HCT116 (cell line): ENCODE measurements at regions of chr14 and their contacts with region 1.

Region 1: DNA sequence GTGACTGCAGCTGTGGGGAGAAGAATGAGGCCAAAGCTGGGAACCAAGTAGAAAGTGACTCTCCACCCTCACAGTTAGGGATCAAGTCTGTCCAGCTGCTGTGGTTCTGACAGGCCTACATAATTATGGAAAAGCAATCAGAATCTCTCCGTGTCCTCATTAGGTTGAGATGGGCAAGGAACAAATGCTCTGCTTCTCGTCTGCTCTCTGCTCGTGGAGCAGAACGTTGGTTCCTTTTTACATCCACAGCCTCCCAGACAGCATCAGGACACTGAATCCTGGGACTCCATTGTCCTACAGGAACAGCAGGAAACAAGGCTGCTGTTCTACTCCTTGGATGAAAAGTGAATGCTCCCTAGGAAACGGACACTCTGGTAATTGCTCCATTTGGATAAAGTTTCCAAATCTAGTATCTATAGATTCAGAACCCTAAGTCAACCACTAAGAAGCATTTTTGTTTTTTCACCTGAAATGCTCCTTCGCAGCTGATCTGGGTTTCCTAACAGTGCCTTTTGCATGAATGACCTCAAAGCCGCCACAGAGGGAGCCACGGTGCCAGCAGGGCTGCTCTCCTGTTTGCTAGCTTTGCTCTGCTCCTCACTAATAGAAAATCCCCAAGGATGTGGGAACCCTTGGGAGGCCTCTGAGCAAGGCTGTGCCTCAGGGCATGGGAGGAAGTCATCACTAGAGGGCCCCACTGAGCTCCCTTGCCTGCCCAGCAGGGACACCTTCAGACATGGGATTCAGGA is 102.0 kb downstream of the EGLN3 start:
- DNase-seq: peak; percentile 82
- ATAC-seq: peak; percentile 99
- H3K4me3 ChIP-seq: no peak overlapping the region
- H3K27ac ChIP-seq: no peak overlapping the region
- H3K4me1 ChIP-seq: peaks cover 0 to 4% of the 10 kb centered on the region in 2 experiments; a peak in 2 of 4 replicates
- H3K27me3 ChIP-seq: no peaks in the 10 kb centered on the region
- CTCF ChIP-seq: peak; percentile 91 to 96 (median 95)
- POLR2A ChIP-seq: no peak
- RAD21 ChIP-seq: peak; percentile 82

Region 2: DNA sequence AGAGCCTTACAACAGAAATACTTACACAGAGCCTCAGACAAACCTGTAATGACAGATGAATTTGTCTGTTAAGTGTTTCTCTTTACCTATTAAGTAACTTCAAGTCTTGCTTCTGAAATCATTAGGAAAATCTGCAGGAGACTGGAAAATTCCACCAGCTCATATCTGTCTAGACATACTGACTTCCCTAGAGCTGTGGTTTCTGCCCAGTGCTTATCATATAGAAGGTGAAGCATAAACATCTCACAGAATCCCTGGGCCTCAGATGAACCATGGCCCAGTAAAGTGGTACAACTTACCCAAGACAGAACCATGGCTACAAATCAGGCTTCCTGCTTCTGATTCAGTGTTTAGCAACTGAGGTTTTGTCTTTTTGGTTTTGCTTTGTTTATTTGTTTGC is 10.4 kb after region 1 on chr14:
- CTCF ChIA-PET with region 1: interaction called, 12 read pairs
- POLR2A ChIA-PET with region 1: no interaction called
- RAD21 ChIA-PET with region 1: no interaction called
- intact Hi-C with region 1: no loop called
- DNase-seq: no peak
- ATAC-seq: no peak
- H3K4me3 ChIP-seq: no peak overlapping the region
- H3K27ac ChIP-seq: no peak overlapping the region
- H3K4me1 ChIP-seq: no peaks in the 10 kb centered on the region
- H3K27me3 ChIP-seq: no peaks in the 10 kb centered on the region
- CTCF ChIP-seq: no peak
- POLR2A ChIP-seq: no peak
- RAD21 ChIP-seq: no peak

Region 3: GRCh38 chr14:34059855-34060638 is 211.2 kb after region 1 on chr14:
- CTCF ChIA-PET with region 1: interaction called, 10 read pairs
- POLR2A ChIA-PET with region 1: no interaction called
- RAD21 ChIA-PET with region 1: no interaction called
- intact Hi-C with region 1: no loop called
- DNase-seq: no peak
- ATAC-seq: peak; percentile 94
- H3K4me3 ChIP-seq: peak overlapping the region; percentile 42 to 63
- H3K27ac ChIP-seq: peak overlapping the region; percentile 82
- H3K4me1 ChIP-seq: peaks cover 8 to 36% of the 10 kb centered on the region in 2 experiments; a peak in 3 of 4 replicates
- H3K27me3 ChIP-seq: no peaks in the 10 kb centered on the region
- CTCF ChIP-seq: 0 out of 6 replicates have a peak, but pooled peaks of 1 of the 3 experiments have one; percentile 10
- POLR2A ChIP-seq: peak; percentile 63
- RAD21 ChIP-seq: peak; percentile 36

Region 4: GRCh38 chr14:34081576-34082136 is 232.8 kb after region 1 on chr14:
- CTCF ChIA-PET with region 1: interaction called, 14 read pairs
- POLR2A ChIA-PET with region 1: no interaction called
- RAD21 ChIA-PET with region 1: interaction called, 3 read pairs
- intact Hi-C with region 1: no loop called
- DNase-seq: peak; percentile 57
- ATAC-seq: peak; percentile 84
- H3K4me3 ChIP-seq: peak overlapping the region in 1 of 2 experiments; percentile 16; a peak in 2 of 4 replicates
- H3K27ac ChIP-seq: peak overlapping the region; percentile 50
- H3K4me1 ChIP-seq: peaks cover 36 to 52% of the 10 kb centered on the region in 2 experiments
- H3K27me3 ChIP-seq: no peaks in the 10 kb centered on the region
- CTCF ChIP-seq: no peak
- POLR2A ChIP-seq: no peak
- RAD21 ChIP-seq: peak; percentile 1; the same call in 1 of the 2 replicates

Region 5: GRCh38 chr14:34098045-34098984 is 249.4 kb after region 1 on chr14:
- CTCF ChIA-PET with region 1: interaction called, 160 read pairs
- POLR2A ChIA-PET with region 1: interaction called, 6 read pairs
- RAD21 ChIA-PET with region 1: interaction called, 28 to 32 read pairs
- intact Hi-C with region 1: loop called (anchors 1 kb)
- DNase-seq: peak; percentile 46
- ATAC-seq: peak; percentile 73
- H3K4me3 ChIP-seq: no peak overlapping the region
- H3K27ac ChIP-seq: no peak overlapping the region
- H3K4me1 ChIP-seq: no peaks in the 10 kb centered on the region
- H3K27me3 ChIP-seq: no peaks in the 10 kb centered on the region
- CTCF ChIP-seq: peak; percentile 61 to 91 (median 83)
- POLR2A ChIP-seq: no peak
- RAD21 ChIP-seq: peak; percentile 94

Region 6: GRCh38 chr14:34227834-34228649 is 379.2 kb after region 1 on chr14:
- CTCF ChIA-PET with region 1: interaction called, 13 read pairs
- POLR2A ChIA-PET with region 1: no interaction called
- RAD21 ChIA-PET with region 1: interaction called, 3 to 5 read pairs
- intact Hi-C with region 1: no loop called
- DNase-seq: peak; percentile 37
- ATAC-seq: peak; percentile 99
- H3K4me3 ChIP-seq: no peak overlapping the region
- H3K27ac ChIP-seq: no peak overlapping the region
- H3K4me1 ChIP-seq: peaks cover 0 to 4% of the 10 kb centered on the region in 2 experiments; a peak in 2 of 4 replicates
- H3K27me3 ChIP-seq: peaks cover 7% of the 10 kb centered on the region
- CTCF ChIP-seq: peak; percentile 61 to 87 (median 84); a peak in 5 of 6 replicates
- POLR2A ChIP-seq: no peak
- RAD21 ChIP-seq: peak; percentile 78

Region 7: GRCh38 chr14:34322940-34323418 is 474.1 kb after region 1 on chr14:
- CTCF ChIA-PET with region 1: interaction called, 14 read pairs
- POLR2A ChIA-PET with region 1: no interaction called
- RAD21 ChIA-PET with region 1: no interaction called
- intact Hi-C with region 1: no loop called
- DNase-seq: peak; percentile 46
- ATAC-seq: peak; percentile 92
- H3K4me3 ChIP-seq: no peak overlapping the region
- H3K27ac ChIP-seq: no peak overlapping the region
- H3K4me1 ChIP-seq: no peaks in the 10 kb centered on the region
- H3K27me3 ChIP-seq: peaks cover 9% of the 10 kb centered on the region; the same call in 1 of the 2 replicates
- CTCF ChIP-seq: peak; percentile 35 to 92 (median 72); a peak in 5 of 6 replicates
- POLR2A ChIP-seq: no peak
- RAD21 ChIP-seq: peak; percentile 36